PC-9 (cell line): ENCODE measurements at regions of chr7 and their contacts with region 1.

Region 1: DNA sequence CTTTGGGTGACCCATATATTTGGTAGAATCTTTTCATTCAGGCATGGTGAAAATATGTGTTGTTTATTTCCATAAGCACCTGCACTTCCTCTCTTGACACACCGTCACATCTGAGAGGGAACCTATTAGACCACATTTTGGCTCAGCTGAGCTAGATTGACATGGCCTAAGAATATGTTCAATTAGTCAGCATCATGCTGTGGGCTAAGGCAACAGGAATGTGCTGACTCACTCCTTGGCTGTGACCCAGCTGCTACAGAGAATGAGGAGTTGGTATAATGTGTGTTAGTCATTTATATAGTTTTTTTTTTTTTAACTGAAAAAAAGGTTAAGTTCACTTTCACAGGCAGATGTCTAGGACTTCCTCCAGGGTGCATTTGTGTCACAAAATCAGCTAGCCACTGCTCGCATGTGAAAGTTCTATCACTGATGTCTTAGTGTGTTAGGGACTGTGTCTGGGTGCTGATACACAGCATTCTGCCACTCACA is 180.6 kb downstream of the SEMA3E start:
- DNase-seq: peak; percentile 95 to 97
- H3K4me3 ChIP-seq: no peak overlapping the region
- H3K27ac ChIP-seq: peak overlapping the region; percentile 68
- H3K4me1 ChIP-seq: peaks cover 19% of the 10 kb centered on the region
- H3K27me3 ChIP-seq: no peaks in the 10 kb centered on the region
- CTCF ChIP-seq: peak; percentile 33; the same call in 1 of the 2 replicates

Region 2: DNA sequence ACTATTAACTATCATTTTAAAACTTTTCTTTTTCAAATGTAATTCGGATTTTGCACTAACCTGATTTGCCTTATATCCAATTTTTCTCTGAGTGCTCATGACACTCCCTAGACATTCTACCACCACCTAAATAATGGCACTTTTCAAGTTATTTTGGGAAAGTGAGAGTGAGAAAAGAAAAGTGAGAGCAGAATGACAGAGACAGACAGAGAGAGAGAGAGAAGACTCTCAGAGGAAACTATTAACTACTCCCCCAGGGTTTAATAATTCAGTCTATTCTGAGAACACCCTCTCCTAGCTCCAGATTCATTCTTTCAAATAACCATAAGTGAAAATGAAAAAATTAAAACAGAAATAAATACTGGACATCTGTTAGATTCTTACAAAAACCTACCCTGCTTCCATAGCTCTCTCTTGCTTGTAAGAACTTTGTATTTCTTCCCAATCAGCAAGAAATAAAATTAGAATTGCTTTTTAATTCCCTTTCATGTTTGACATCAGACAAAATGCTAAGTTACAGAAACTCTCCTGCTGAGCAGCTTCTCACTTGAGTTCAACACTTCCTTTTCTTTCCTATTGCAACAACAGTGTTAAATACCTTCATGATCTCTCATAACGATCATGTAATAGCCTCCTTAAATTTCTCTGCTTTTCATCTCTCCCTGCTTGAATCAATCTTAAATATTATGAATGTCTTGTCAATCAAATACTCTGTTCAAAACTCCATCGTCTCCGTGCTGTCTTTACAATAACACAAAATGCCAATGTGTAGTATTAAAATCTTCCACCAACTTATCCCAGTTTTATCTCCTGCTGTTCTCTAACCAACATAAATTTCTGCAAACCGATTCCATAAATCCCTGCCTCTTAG is 11.0 kb before region 1 on chr7:
- CTCF ChIA-PET with region 1: no interaction called
- POLR2A ChIA-PET with region 1: no interaction called
- intact Hi-C with region 1: no loop called
- DNase-seq: no peak
- H3K4me3 ChIP-seq: no peak overlapping the region
- H3K27ac ChIP-seq: no peak overlapping the region
- H3K4me1 ChIP-seq: no peaks in the 10 kb centered on the region
- H3K27me3 ChIP-seq: no peaks in the 10 kb centered on the region
- CTCF ChIP-seq: no peak

Region 3: DNA sequence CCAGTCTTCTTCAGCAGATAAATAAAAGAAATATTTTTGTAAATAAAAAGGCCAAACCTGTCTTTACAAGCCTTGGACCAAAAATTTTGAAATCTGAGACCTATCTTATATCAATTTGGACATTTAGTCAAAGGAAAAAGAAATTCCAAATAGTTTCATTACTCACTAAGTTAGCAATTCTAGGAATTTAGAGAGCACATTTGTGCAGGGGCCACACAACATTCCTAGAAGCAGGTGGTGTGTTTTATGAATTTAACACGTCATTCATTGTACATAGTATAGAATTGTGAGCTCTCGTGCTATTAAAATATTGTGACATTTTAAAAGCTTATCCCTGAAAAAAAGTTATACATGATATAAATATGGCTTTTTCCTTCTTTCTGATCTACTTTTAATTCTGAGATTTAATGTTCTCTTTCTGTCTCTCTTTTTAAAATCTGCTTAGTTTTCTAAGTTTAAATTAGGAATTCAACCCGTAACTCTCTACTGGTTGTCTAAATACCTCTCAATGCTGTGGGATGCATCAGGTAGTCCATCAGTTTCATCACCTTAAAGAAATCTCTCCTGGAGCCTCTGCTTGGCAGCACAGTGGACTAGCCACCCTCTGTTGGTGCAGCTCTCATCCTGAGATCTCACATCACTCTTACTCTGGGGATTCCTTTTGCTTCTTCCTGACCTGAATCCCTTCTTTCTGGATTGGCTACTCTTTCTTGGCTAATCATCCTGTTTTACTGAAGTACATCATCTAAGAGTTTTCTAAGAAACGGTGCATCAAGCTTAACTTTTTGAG is 56.2 kb after region 1 on chr7:
- CTCF ChIA-PET with region 1: interaction called, 3 read pairs
- POLR2A ChIA-PET with region 1: no interaction called
- intact Hi-C with region 1: loop called (anchors 1 kb)
- DNase-seq: peak; percentile 34 to 80
- H3K4me3 ChIP-seq: no peak overlapping the region
- H3K27ac ChIP-seq: no peak overlapping the region
- H3K4me1 ChIP-seq: peaks cover 9% of the 10 kb centered on the region; the same call in 1 of the 2 replicates
- H3K27me3 ChIP-seq: no peaks in the 10 kb centered on the region
- CTCF ChIP-seq: no peak

Region 4: DNA sequence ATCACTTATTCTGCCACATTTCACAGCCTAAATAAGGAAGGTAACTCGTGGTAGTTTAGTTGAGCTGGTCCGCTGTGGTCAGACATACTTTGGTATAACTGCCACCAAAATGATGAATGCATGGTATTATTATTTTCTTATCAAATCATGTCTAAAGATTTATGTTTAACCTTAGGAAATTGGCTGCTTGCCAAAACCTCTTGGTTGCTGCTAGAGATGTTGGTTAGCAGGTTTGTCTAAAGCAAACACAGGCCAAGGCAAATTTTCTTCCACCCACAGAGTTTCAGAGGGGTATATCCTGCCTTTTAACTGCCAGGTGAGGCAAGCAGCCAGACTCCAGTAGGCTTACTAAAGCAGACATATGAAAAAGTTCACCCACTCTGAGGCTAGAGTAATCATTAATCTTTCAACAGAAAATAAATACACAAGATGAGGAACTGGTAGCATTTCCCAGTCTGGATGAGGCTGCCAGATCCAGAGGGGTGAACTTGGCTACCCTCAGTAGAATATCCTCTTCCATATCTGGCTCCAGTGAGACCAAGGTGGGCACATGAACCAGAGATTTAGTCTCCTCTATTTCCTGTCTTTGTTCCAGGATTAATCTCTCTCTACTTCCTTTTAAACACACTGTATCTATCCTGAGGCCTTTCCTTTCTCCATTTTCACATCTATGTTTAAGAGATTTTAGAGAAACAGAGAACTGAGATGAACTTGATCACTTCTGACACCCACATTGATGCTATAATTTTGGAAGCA is 79.4 kb after region 1 on chr7:
- CTCF ChIA-PET with region 1: no interaction called
- POLR2A ChIA-PET with region 1: no interaction called
- intact Hi-C with region 1: loop called (anchors 1 kb)
- DNase-seq: peak; percentile 55 to 59
- H3K4me3 ChIP-seq: no peak overlapping the region
- H3K27ac ChIP-seq: 0 out of 2 replicates have a peak overlapping the region, but pooled peaks have one; percentile 35
- H3K4me1 ChIP-seq: peaks cover 8% of the 10 kb centered on the region
- H3K27me3 ChIP-seq: no peaks in the 10 kb centered on the region
- CTCF ChIP-seq: no peak

Region 5: DNA sequence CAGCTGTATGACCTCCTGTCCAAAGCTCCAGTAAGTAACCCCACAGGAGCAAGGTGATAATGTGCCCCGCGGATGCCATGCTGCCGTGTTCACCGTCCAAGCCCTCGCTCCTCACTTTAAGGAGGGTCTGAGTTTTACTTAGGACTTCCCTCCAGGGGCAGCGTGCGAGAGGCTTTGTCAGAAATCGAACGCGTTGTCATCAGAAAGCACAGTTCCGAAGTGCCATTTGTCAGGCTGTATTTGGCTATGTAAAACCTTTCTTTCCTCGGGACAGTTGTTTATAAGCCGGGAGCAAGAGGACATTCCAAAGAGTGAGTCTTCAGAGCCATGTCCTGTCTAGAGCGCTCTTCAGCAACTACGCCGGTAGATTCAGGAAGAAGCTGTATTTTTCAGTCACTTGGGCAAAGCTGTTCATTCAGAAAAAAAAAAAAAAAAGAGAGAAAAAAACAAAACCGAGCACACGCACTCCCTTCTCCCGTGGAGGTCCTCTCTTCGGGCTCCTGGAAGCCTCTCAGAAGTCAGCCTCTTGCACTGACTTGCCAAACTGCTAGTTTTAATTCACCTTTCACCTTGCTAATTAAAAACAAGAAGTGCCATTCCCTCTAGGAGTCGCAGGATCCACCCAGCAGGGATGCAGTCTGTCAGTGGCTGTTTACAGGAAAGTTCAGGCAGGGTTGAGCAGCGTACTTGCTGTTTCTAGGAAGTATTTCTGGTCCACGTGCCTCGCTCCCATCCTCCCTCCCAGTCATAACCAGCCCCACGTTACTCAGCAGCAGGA is 180.4 kb after region 1 on chr7 and contains the start of gene SEMA3E:
- CTCF ChIA-PET with region 1: no interaction called
- POLR2A ChIA-PET with region 1: no interaction called
- intact Hi-C with region 1: loop called (anchors 2 kb)
- DNase-seq: peak; percentile 35 to 62
- H3K4me3 ChIP-seq: peak within 1 kb of the TSS; percentile 71
- H3K27ac ChIP-seq: peak within 1 kb of the TSS; percentile 54
- H3K4me1 ChIP-seq: peaks cover 21% of the 10 kb centered on the region
- H3K27me3 ChIP-seq: no peaks in the 10 kb centered on the region
- CTCF ChIP-seq: 0 out of 2 replicates have a peak, but pooled peaks have one; percentile 24
- total RNA-seq, gene SEMA3E: 1.8 and 2.1 TPM in 2 replicates